Naive thymus-derived CD4-positive, alpha-beta T cell (primary cell): ENCODE measurements at regions of chrX and their contacts with region 1.

Region 1: GRCh38 chrX:45801554-45801953 is 600.9 kb upstream of the DIPK2B start:
- DNase-seq: peak in 5 of 9 donors; percentile 9 to 49 (median 35)
- ATAC-seq: peak; percentile 66
- H3K4me3 ChIP-seq: no peak overlapping the region
- H3K4me3 Mint-ChIP-seq: peak overlapping the region in 6 of 10 donors; percentile 19 to 50 (median 33)
- H3K27ac ChIP-seq: no peak overlapping the region
- H3K27ac Mint-ChIP-seq: peak overlapping the region in 5 of 9 donors; percentile 18 to 56 (median 49)
- H3K4me1 ChIP-seq: peaks cover 11 to 20% of the 10 kb centered on the region in 2 donors
- H3K4me1 Mint-ChIP-seq: peaks cover under 1 to 60% (median 25%) of the 10 kb centered on the region in 7 donors
- H3K27me3 ChIP-seq: no peaks in the 10 kb centered on the region
- H3K27me3 Mint-ChIP-seq: no peaks in the 10 kb centered on the region

Region 2: GRCh38 chrX:45515262-45516215 is 286.0 kb before region 1 on chrX:
- CTCF ChIA-PET with region 1: no interaction called
- POLR2A ChIA-PET with region 1: no interaction called
- intact Hi-C with region 1: loop called in 1 of 2 experiments (anchors 1 kb)
- DNase-seq: peak in 6 of 9 donors; percentile 13 to 35 (median 20)
- ATAC-seq: peak; percentile 68
- H3K4me3 ChIP-seq: no peak overlapping the region
- H3K4me3 Mint-ChIP-seq: no peak overlapping the region
- H3K27ac ChIP-seq: no peak overlapping the region
- H3K27ac Mint-ChIP-seq: no peak overlapping the region
- H3K4me1 ChIP-seq: no peaks in the 10 kb centered on the region
- H3K4me1 Mint-ChIP-seq: peaks cover 0 to 11% (median 0%) of the 10 kb centered on the region in 7 donors
- H3K27me3 ChIP-seq: no peaks in the 10 kb centered on the region
- H3K27me3 Mint-ChIP-seq: peaks cover 0 to 5% (median 0%) of the 10 kb centered on the region in 5 donors

Region 3: GRCh38 chrX:45769761-45770582 is 31.6 kb before region 1 on chrX:
- CTCF ChIA-PET with region 1: interaction called, 9 read pairs
- POLR2A ChIA-PET with region 1: interaction called, 42 read pairs
- intact Hi-C with region 1: loop called (anchors 1 kb)
- DNase-seq: peak in 3 of 9 donors; percentile 13 to 64 (median 21)
- ATAC-seq: peak; percentile 79
- H3K4me3 ChIP-seq: peak overlapping the region; percentile 71
- H3K4me3 Mint-ChIP-seq: peak overlapping the region; percentile 76 to 95 (median 90)
- H3K27ac ChIP-seq: peak overlapping the region; percentile 76
- H3K27ac Mint-ChIP-seq: peak overlapping the region; percentile 90 to 97 (median 94)
- H3K4me1 ChIP-seq: peaks cover 11 to 45% of the 10 kb centered on the region in 2 donors
- H3K4me1 Mint-ChIP-seq: peaks cover 16 to 68% (median 55%) of the 10 kb centered on the region in 7 donors
- H3K27me3 ChIP-seq: no peaks in the 10 kb centered on the region
- H3K27me3 Mint-ChIP-seq: no peaks in the 10 kb centered on the region

Region 4: GRCh38 chrX:45781901-45782553 is 19.5 kb before region 1 on chrX:
- CTCF ChIA-PET with region 1: no interaction called
- POLR2A ChIA-PET with region 1: interaction called, 3 read pairs
- intact Hi-C with region 1: loop called in 1 of 2 experiments (anchors 2 kb)
- DNase-seq: no peak
- ATAC-seq: peak; percentile 37
- H3K4me3 ChIP-seq: no peak overlapping the region
- H3K4me3 Mint-ChIP-seq: no peak overlapping the region
- H3K27ac ChIP-seq: no peak overlapping the region
- H3K27ac Mint-ChIP-seq: peak overlapping the region in 1 of 9 donors; percentile 62
- H3K4me1 ChIP-seq: no peaks in the 10 kb centered on the region
- H3K4me1 Mint-ChIP-seq: peaks cover 0 to 73% (median 4%) of the 10 kb centered on the region in 7 donors
- H3K27me3 ChIP-seq: no peaks in the 10 kb centered on the region
- H3K27me3 Mint-ChIP-seq: no peaks in the 10 kb centered on the region

Region 5: GRCh38 chrX:45843518-45843917 is 42.0 kb after region 1 on chrX:
- CTCF ChIA-PET with region 1: interaction called, 15 read pairs
- POLR2A ChIA-PET with region 1: interaction called, 24 read pairs
- intact Hi-C with region 1: loop called (anchors 1 kb)
- DNase-seq: peak in 4 of 9 donors; percentile 4 to 23 (median 16)
- ATAC-seq: no peak
- H3K4me3 ChIP-seq: no peak overlapping the region
- H3K4me3 Mint-ChIP-seq: peak overlapping the region in 1 of 10 donors; percentile 40
- H3K27ac ChIP-seq: no peak overlapping the region
- H3K27ac Mint-ChIP-seq: peak overlapping the region in 2 of 9 donors; percentile 10 to 51
- H3K4me1 ChIP-seq: no peaks in the 10 kb centered on the region
- H3K4me1 Mint-ChIP-seq: peaks cover 0 to 52% (median 9%) of the 10 kb centered on the region in 7 donors
- H3K27me3 ChIP-seq: no peaks in the 10 kb centered on the region
- H3K27me3 Mint-ChIP-seq: no peaks in the 10 kb centered on the region

Region 6: DNA sequence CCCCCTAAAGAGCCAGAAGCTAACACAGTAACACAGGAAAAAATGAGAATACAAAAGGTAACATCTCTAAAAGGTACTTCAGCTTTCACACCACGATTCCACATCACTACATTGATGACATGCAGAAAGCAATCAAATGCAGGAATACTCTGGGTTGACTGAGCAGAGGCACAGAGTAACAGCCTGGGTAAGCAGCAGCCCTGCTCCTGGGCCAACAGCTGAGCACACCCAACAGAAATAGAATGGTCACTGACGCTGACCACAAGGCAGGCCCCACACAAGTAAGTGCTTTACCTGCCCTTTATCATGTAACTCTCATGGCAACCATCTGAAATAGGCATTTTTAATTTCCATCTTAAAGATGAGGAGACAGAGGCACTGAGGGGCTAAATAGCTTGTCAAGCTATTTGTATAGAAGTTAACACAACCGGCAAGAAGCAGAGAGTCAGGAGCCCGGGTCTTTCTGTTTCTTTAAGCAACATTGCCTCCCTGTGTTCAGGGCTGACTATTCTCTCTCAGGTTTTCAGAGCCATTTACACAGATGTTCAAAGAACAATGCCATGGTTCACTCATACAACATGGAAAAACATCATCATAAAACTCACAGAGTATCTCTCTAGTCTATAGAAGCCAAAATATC is 574.8 kb after region 1 on chrX:
- CTCF ChIA-PET with region 1: interaction called, 4 read pairs
- POLR2A ChIA-PET with region 1: no interaction called
- intact Hi-C with region 1: loop called in 1 of 2 experiments (anchors 1 kb)
- DNase-seq: peak in 4 of 9 donors; percentile 18 to 31 (median 24)
- ATAC-seq: no peak
- H3K4me3 ChIP-seq: no peak overlapping the region
- H3K4me3 Mint-ChIP-seq: no peak overlapping the region
- H3K27ac ChIP-seq: no peak overlapping the region
- H3K27ac Mint-ChIP-seq: no peak overlapping the region
- H3K4me1 ChIP-seq: no peaks in the 10 kb centered on the region
- H3K4me1 Mint-ChIP-seq: peaks cover 0 to 4% (median 0%) of the 10 kb centered on the region in 7 donors
- H3K27me3 ChIP-seq: no peaks in the 10 kb centered on the region
- H3K27me3 Mint-ChIP-seq: peaks cover 0 to 7% (median 0%) of the 10 kb centered on the region in 5 donors

Region 7: GRCh38 chrX:46408553-46409407 is 607.2 kb after region 1 on chrX:
- CTCF ChIA-PET with region 1: interaction called, 12 read pairs
- POLR2A ChIA-PET with region 1: no interaction called
- intact Hi-C with region 1: loop called in 1 of 2 experiments (anchors 1 kb)
- DNase-seq: peak; percentile 12 to 61 (median 38)
- ATAC-seq: peak; percentile 54
- H3K4me3 ChIP-seq: no peak overlapping the region
- H3K4me3 Mint-ChIP-seq: no peak overlapping the region
- H3K27ac ChIP-seq: no peak overlapping the region
- H3K27ac Mint-ChIP-seq: peak overlapping the region in 1 of 9 donors; percentile 59
- H3K4me1 ChIP-seq: no peaks in the 10 kb centered on the region
- H3K4me1 Mint-ChIP-seq: peaks cover 0 to 2% (median 0%) of the 10 kb centered on the region in 7 donors
- H3K27me3 ChIP-seq: no peaks in the 10 kb centered on the region
- H3K27me3 Mint-ChIP-seq: peaks cover 0 to 5% (median 0%) of the 10 kb centered on the region in 5 donors